Vagina (tissue), 2 donors: ENCODE measurements at regions of chr7 and their contacts with region 1.

Region 1: GRCh38 chr7:100478966-100479665 is at the start of gene TSC22D4:
- DNase-seq: peak in 1 of 2 donors; percentile 98
- H3K4me3 ChIP-seq: peak within 1 kb of the TSS; percentile 88 to 92
- H3K27ac ChIP-seq: peak within 1 kb of the TSS; percentile 92
- H3K4me1 ChIP-seq: peaks cover 55% of the 10 kb centered on the region
- H3K27me3 ChIP-seq: no peaks in the 10 kb centered on the region
- CTCF ChIP-seq: no peak
- POLR2A ChIP-seq: peak in 1 of 2 donors; percentile 87
- total RNA-seq, gene TSC22D4: 34.6 TPM

Region 2: GRCh38 chr7:99112097-99112496 is 1367.0 kb before region 1 on chr7:
- intact Hi-C with region 1: no loop called
- DNase-seq: no peak
- H3K4me3 ChIP-seq: no peak overlapping the region
- H3K27ac ChIP-seq: no peak overlapping the region
- H3K4me1 ChIP-seq: peaks cover 56% of the 10 kb centered on the region
- H3K27me3 ChIP-seq: no peaks in the 10 kb centered on the region
- CTCF ChIP-seq: no peak
- POLR2A ChIP-seq: no peak

Region 3: DNA sequence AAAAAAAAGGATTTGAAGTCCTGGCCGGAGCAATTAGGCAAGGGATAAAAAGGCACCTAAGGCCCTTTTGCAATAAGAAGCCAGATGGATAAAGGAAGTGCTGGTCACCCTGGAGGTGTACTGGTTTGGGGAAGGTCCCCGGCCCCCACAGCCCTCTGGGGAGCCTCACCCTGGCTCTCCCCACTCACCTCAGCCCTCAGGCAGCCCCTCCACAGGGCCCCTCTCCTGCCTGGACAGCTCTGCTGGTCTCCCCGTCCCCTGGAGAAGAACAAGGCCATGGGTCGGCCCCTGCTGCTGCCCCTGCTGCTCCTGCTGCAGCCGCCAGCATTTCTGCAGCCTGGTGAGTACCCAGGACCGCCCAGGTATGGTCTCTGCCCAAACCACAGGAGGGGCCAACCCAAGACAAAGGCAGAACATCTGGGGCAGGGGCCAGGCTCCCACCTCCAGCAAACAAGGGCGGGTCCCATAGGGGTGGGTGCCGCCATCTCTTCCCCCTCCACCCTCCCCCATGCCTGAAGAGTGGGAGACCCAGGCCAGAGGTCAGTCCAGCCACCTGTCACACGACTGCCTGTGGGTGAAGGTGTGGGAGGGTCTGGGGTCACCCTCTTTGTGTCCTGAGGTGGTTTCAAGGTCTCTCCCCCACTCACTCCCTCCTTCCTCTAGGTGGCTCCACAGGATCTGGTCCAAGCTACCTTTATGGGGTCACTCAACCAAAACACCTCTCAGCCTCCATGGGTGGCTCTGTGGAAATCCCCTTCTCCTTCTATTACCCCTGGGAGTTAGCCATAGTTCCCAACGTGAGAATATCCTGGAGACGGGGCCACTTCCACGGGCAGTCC is 120.9 kb before region 1 on chr7 and contains the start of gene PILRB:
- intact Hi-C with region 1: no loop called
- DNase-seq: no peak
- H3K4me3 ChIP-seq: no peak within 1 kb of the TSS
- H3K27ac ChIP-seq: no peak within 1 kb of the TSS
- H3K4me1 ChIP-seq: no peaks in the 10 kb centered on the region
- H3K27me3 ChIP-seq: no peaks in the 10 kb centered on the region
- CTCF ChIP-seq: no peak
- POLR2A ChIP-seq: no peak
- total RNA-seq, gene PILRB: 56.0 TPM

Region 4: GRCh38 chr7:100586266-100587025 is 107.3 kb after region 1 on chr7 and contains the start of gene FBXO24:
- intact Hi-C with region 1: loop called (anchors 1 kb)
- DNase-seq: peak; percentile 100
- H3K4me3 ChIP-seq: peak within 1 kb of the TSS; percentile 79 to 96
- H3K27ac ChIP-seq: peak within 1 kb of the TSS; percentile 94
- H3K4me1 ChIP-seq: peaks cover 57% of the 10 kb centered on the region
- H3K27me3 ChIP-seq: no peaks in the 10 kb centered on the region
- CTCF ChIP-seq: no peak
- POLR2A ChIP-seq: peak in 1 of 2 donors; percentile 60
- total RNA-seq, gene FBXO24: 0.98 TPM